Mammary epithelial cell (primary cell): ENCODE measurements at regions of chr3 and their contacts with region 1.

Region 1: DNA sequence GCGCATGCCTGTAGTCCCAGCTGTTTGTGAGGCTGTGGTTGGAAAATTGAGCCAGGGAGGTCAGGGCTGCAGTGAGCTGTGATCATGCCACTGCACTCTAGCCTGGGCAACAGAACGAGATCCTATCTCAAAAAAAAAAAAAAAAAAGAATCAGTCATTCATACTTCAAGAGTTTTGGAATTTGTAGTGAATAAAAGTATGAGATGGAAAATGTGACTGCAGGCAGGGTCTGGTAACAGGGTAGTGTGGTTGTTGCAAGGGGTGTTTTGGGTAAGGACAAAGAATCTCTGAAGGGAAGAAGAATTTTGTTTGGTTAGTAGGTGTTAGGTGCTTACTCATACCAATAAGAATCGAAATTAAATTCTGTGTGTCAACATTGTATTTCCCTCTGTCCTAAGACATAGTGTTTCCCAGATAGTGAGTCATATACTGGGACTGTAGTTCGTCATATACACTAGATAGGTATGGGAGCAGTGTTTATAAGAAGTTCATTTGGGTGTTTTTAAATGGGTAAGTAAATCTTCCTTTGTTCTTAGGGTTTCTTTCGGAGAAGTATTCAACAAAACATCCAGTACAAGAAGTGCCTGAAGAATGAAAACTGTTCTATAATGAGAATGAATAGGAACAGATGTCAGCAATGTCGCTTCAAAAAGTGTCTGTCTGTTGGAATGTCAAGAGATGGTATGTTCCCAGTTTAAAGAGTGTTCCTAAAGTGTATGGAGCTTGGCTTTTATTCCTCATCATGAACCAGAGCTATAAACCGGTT is 14.2 kb downstream of the NR1D2 start:
- DNase-seq: peak; percentile 93
- H3K4me3 ChIP-seq: no peak overlapping the region
- H3K27ac ChIP-seq: peak overlapping the region; percentile 78
- H3K4me1 ChIP-seq: peaks cover 23% of the 10 kb centered on the region
- H3K27me3 ChIP-seq: no peaks in the 10 kb centered on the region
- CTCF ChIP-seq: no peak

Region 2: GRCh38 chr3:23913873-23914743 is 45.2 kb before region 1 on chr3:
- CTCF ChIA-PET with region 1: no interaction called
- dilution Hi-C with region 1: no loop called
- in situ Hi-C with region 1: no loop called
- intact Hi-C with region 1: no loop called
- DNase-seq: no peak
- H3K4me3 ChIP-seq: no peak overlapping the region
- H3K27ac ChIP-seq: no peak overlapping the region
- H3K4me1 ChIP-seq: peaks cover 16% of the 10 kb centered on the region
- H3K27me3 ChIP-seq: no peaks in the 10 kb centered on the region
- CTCF ChIP-seq: no peak

Region 3: GRCh38 chr3:23945903-23946751 is 13.2 kb before region 1 on chr3:
- CTCF ChIA-PET with region 1: no interaction called
- dilution Hi-C with region 1: no loop called
- in situ Hi-C with region 1: no loop called
- intact Hi-C with region 1: loop called (anchors 1 kb)
- DNase-seq: peak; percentile 96
- H3K4me3 ChIP-seq: peak overlapping the region; percentile 40 to 68 (median 65)
- H3K27ac ChIP-seq: peak overlapping the region; percentile 89
- H3K4me1 ChIP-seq: peaks cover 35% of the 10 kb centered on the region
- H3K27me3 ChIP-seq: no peaks in the 10 kb centered on the region
- CTCF ChIP-seq: no peak

Region 4: GRCh38 chr3:24020036-24020691 is 60.8 kb after region 1 on chr3:
- CTCF ChIA-PET with region 1: no interaction called
- dilution Hi-C with region 1: no loop called
- in situ Hi-C with region 1: no loop called
- intact Hi-C with region 1: no loop called
- DNase-seq: no peak
- H3K4me3 ChIP-seq: no peak overlapping the region
- H3K27ac ChIP-seq: no peak overlapping the region
- H3K4me1 ChIP-seq: peaks cover 7% of the 10 kb centered on the region
- H3K27me3 ChIP-seq: no peaks in the 10 kb centered on the region
- CTCF ChIP-seq: no peak